Lower leg skin (tissue), 4 donors: ENCODE measurements at regions of chr18 and their contacts with region 1.

Region 1: GRCh38 chr18:38693104-38693503 is 1127.5 kb upstream of the CELF4 start:
- DNase-seq: no peak
- H3K4me3 ChIP-seq: no peak overlapping the region
- CTCF ChIP-seq: no peak
- POLR2A ChIP-seq: no peak

Region 2: GRCh38 chr18:36993068-36993467 is 1700.0 kb before region 1 on chr18:
- intact Hi-C with region 1: loop called (anchors 5 kb)
- DNase-seq: no peak
- H3K4me3 ChIP-seq: no peak overlapping the region
- CTCF ChIP-seq: no peak
- POLR2A ChIP-seq: no peak

Region 3: DNA sequence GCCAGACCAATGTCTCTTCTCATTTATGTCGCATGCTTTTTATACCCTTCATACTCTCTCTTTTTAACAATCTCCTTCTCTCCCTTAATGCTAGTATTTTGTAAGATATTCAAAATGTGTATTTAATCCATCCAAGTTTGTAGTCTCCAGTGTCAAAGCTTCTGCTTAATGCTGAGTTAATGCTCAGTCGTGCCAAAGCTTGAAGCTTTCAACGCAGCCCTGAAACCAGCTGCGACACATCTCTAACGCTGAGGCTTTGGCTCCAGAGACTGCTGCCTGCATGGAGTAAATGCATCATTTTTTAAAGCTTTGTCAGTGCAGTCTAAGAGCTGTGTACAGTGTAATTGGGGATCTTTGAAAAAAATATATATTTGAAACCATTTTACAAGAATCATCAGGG is 1153.2 kb after region 1 on chr18:
- intact Hi-C with region 1: no loop called
- DNase-seq: no peak
- H3K4me3 ChIP-seq: no peak overlapping the region
- CTCF ChIP-seq: no peak
- POLR2A ChIP-seq: no peak